ENCODE measurements at regions of chr1 and their contacts with region 1.

Region 1: GRCh38 chr1:27044613-27045151 is 32.0 kb upstream of the TENT5B start:
- DNase-seq: peak; percentile 96
- ATAC-seq: peak; percentile 94

Region 2: GRCh38 chr1:26972390-26972789 is 72.3 kb before region 1 on chr1:
- intact Hi-C with region 1: no loop called
- DNase-seq: no peak
- ATAC-seq: no peak

Region 3: DNA sequence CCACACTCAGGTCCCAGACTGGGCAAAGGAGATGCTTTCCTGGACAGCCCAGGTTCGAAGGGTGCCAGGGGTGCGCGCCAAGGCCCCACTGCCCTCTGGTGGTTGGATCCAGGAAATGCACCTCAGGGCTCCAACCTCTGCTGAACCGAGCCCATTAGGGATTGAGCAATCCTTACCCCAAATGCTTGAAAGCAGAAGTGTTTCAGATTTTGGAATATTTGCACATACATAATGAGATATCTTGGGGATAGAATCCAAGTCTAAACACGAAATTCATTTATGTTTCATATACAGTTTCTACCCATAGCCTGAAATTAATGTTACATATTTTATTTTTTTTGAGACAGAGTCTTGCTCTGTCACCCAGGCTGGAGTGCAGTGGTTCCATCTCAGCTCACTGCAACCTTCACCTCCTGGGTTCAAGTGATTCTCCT is 52.8 kb after region 1 on chr1:
- intact Hi-C with region 1: loop called (anchors 5 kb)
- DNase-seq: peak; percentile 89
- ATAC-seq: peak; percentile 79